ENCODE measurements at regions of chr2 and their contacts with region 1.

Region 1: GRCh38 chr2:105789745-105790460 is 45.2 kb downstream of the NCK2 start:
- DNase-seq: peak; percentile 85
- ATAC-seq: peak; percentile 87
- H3K4me3 Mint-ChIP-seq: peak overlapping the region; percentile 73
- H3K27ac Mint-ChIP-seq: peak overlapping the region; percentile 98
- H3K4me1 Mint-ChIP-seq: peaks cover 90% of the 10 kb centered on the region
- H3K27me3 Mint-ChIP-seq: no peaks in the 10 kb centered on the region

Region 2: GRCh38 chr2:105744909-105745853 is 44.7 kb before region 1 on chr2 and contains the start of gene NCK2:
- CTCF ChIA-PET with region 1: interaction called, 12 read pairs
- POLR2A ChIA-PET with region 1: interaction called, 26 read pairs
- DNase-seq: peak; percentile 45
- ATAC-seq: peak; percentile 14
- H3K4me3 Mint-ChIP-seq: peak within 1 kb of the TSS; percentile 94
- H3K27ac Mint-ChIP-seq: peak within 1 kb of the TSS; percentile 88
- H3K4me1 Mint-ChIP-seq: peaks cover 66% of the 10 kb centered on the region
- H3K27me3 Mint-ChIP-seq: no peaks in the 10 kb centered on the region
- total RNA-seq, gene NCK2: 60.7 to 61.3 TPM

Region 3: GRCh38 chr2:105761931-105762515 is 27.9 kb before region 1 on chr2:
- CTCF ChIA-PET with region 1: interaction called, 11 read pairs
- POLR2A ChIA-PET with region 1: interaction called, 4 read pairs
- DNase-seq: no peak
- ATAC-seq: no peak
- H3K4me3 Mint-ChIP-seq: peak overlapping the region; percentile 8
- H3K27ac Mint-ChIP-seq: peak overlapping the region; percentile 68
- H3K4me1 Mint-ChIP-seq: peaks cover 87% of the 10 kb centered on the region
- H3K27me3 Mint-ChIP-seq: no peaks in the 10 kb centered on the region

Region 4: GRCh38 chr2:105802587-105802986 is 12.7 kb after region 1 on chr2:
- CTCF ChIA-PET with region 1: interaction called, 54 read pairs
- POLR2A ChIA-PET with region 1: interaction called, 13 read pairs
- DNase-seq: peak; percentile 42
- ATAC-seq: peak; percentile 43
- H3K4me3 Mint-ChIP-seq: peak overlapping the region; percentile 31
- H3K27ac Mint-ChIP-seq: peak overlapping the region; percentile 97
- H3K4me1 Mint-ChIP-seq: peaks cover 92% of the 10 kb centered on the region
- H3K27me3 Mint-ChIP-seq: no peaks in the 10 kb centered on the region

Region 5: GRCh38 chr2:105814291-105814940 is 24.5 kb after region 1 on chr2:
- CTCF ChIA-PET with region 1: no interaction called
- POLR2A ChIA-PET with region 1: no interaction called
- DNase-seq: no peak
- ATAC-seq: no peak
- H3K4me3 Mint-ChIP-seq: no peak overlapping the region
- H3K27ac Mint-ChIP-seq: peak overlapping the region; percentile 43
- H3K4me1 Mint-ChIP-seq: peaks cover 60% of the 10 kb centered on the region
- H3K27me3 Mint-ChIP-seq: no peaks in the 10 kb centered on the region

Region 6: GRCh38 chr2:105858868-105859693 is 69.2 kb after region 1 on chr2:
- CTCF ChIA-PET with region 1: interaction called, 17 read pairs
- POLR2A ChIA-PET with region 1: interaction called, 5 read pairs
- DNase-seq: peak; percentile 36
- ATAC-seq: peak; percentile 44
- H3K4me3 Mint-ChIP-seq: peak overlapping the region; percentile 8
- H3K27ac Mint-ChIP-seq: peak overlapping the region; percentile 83
- H3K4me1 Mint-ChIP-seq: peaks cover 93% of the 10 kb centered on the region
- H3K27me3 Mint-ChIP-seq: no peaks in the 10 kb centered on the region